ENCODE measurements at regions of chr6 and their contacts with region 1.

Region 1: GRCh38 chr6:10510592-10511367 is 10.4 kb upstream of the GCNT2 start:
- DNase-seq: peak; percentile 75
- ATAC-seq: peak; percentile 97

Region 2: DNA sequence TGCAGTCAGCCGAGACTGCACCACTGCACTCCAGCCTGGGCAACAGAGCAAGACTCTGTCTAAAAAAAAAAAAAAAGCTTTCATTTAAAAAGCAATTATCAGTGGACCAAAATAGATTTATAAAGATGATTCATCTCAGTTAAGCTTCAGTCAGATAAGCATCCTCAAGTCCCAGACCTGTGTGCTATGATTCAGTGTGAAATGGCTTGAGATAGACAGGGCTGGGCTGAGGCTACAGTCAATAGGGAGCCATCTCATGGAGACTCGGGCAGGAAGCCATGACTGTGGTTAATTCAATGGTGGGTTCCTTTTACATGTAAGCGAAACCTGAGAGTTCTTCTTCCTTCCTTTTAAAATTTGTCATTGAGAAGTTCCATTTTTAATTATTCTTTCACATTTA is 371.9 kb before region 1 on chr6:
- intact Hi-C with region 1: no loop called
- DNase-seq: no peak
- ATAC-seq: no peak

Region 3: DNA sequence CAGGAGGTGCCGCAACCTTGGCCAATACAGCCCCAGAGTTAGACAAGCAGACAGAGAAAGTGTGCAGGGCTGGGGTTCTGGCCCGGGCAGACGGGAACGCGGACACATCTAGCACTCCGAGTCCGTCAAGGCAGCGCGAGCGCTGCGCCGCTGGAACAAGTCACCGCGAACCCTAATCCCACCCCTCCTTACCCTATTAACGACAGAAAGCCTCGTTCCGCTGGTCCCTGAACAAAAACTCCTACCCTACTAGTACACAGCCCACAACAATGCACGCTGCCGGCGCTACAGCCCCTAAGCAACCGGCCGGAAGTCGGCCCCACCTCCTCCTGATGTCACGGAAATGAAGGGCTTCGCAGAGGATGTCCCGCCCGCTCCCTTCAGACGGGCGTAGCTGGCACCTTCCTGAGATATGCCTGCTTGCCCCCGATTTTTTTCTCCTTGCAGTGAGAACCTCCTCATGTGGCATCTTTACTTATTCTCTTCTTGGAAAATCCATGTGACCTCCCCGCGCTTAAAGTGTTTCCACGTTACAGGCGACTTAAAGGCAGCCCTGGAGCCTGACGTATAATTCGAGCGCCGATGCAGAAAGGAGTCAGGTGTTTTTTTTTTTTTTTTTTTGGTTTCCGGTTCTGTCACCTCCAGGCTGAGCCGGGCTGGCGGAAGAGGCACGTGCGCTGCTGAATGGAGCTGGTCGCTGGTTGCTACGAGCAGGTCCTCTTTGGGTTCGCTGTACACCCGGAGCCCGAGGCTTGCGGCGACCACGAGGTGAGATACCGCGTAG is 183.7 kb after region 1 on chr6 and contains the starts of genes C6orf52 and PAK1IP1:
- intact Hi-C with region 1: loop called (anchors 2 kb)
- DNase-seq: peak; percentile 96
- ATAC-seq: peak; percentile 100
- total RNA-seq, gene C6orf52: 0.78 TPM
- total RNA-seq, gene PAK1IP1: 10.4 TPM